Naive thymus-derived CD4-positive, alpha-beta T cell (primary cell): ENCODE measurements at regions of chr19 and their contacts with region 1.

Region 1: DNA sequence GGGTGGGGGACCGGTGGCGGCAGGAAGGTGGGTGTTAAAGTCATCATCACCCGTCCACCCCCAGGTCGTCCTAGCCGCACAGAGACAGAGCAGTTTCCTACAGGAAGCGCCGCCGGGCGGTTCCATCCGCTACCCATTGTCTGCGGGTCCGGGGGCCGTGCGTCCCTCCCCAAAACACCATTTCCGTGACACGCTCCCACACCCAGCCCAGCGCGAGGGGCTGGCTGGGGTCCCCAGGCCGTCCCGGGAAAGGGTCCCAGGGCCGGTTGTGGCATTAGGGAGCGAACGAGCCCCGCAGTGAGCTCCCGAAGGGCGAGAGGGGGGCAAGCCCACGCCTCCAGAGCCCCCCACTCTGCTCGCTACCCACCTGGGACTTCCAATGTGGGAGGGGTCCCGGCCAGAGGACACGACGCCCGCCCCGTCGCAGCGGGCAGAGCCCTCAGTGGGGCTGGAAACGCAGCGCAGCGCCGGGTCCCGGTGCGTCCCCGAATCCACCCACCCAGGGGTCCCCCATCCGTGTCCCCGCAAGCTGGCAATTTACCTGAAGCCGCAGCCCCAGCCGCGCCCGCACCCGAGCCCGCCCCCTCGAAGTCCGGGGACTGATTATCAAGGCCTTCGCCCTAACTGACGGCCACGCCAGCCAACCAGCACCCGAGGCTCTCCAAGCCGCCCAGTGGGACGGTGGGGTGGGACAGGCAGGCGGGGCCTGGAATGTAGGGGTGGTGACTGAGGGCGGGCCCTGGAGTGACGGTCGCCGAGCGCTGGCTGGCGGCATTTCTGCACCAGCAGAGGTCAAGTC is at the start of gene KANK3:
- DNase-seq: peak; percentile 74 to 90 (median 86)
- ATAC-seq: peak; percentile 100
- H3K4me3 ChIP-seq: peak within 1 kb of the TSS; percentile 64
- H3K4me3 Mint-ChIP-seq: peak within 1 kb of the TSS; percentile 64 to 88 (median 82)
- H3K27ac ChIP-seq: peak within 1 kb of the TSS; percentile 56
- H3K27ac Mint-ChIP-seq: peak within 1 kb of the TSS in 5 of 9 donors; percentile 8 to 84 (median 67)
- H3K4me1 ChIP-seq: no peaks in the 10 kb centered on the region
- H3K4me1 Mint-ChIP-seq: peaks cover 0 to 13% (median 6%) of the 10 kb centered on the region in 7 donors
- H3K27me3 ChIP-seq: no peaks in the 10 kb centered on the region
- H3K27me3 Mint-ChIP-seq: peaks cover 5 to 46% (median 5%) of the 10 kb centered on the region in 5 donors
- total RNA-seq, gene KANK3: 1.3 to 4.4 (median 1.8) TPM

Region 2: GRCh38 chr19:8005534-8006256 is 337.2 kb before region 1 on chr19 and contains the start of gene ELAVL1:
- CTCF ChIA-PET with region 1: no interaction called
- POLR2A ChIA-PET with region 1: no interaction called
- intact Hi-C with region 1: no loop called
- DNase-seq: peak; percentile 80 to 96 (median 88)
- ATAC-seq: peak; percentile 96
- H3K4me3 ChIP-seq: peak within 1 kb of the TSS; percentile 86
- H3K4me3 Mint-ChIP-seq: peak within 1 kb of the TSS; percentile 88 to 97 (median 92)
- H3K27ac ChIP-seq: peak within 1 kb of the TSS; percentile 93
- H3K27ac Mint-ChIP-seq: peak within 1 kb of the TSS; percentile 78 to 94 (median 90)
- H3K4me1 ChIP-seq: peaks cover 20 to 25% of the 10 kb centered on the region in 2 donors
- H3K4me1 Mint-ChIP-seq: peaks cover 30 to 43% (median 37%) of the 10 kb centered on the region in 7 donors
- H3K27me3 ChIP-seq: no peaks in the 10 kb centered on the region
- H3K27me3 Mint-ChIP-seq: no peaks in the 10 kb centered on the region
- total RNA-seq, gene ELAVL1: 32.4 to 117 (median 49.6) TPM

Region 3: GRCh38 chr19:8269724-8270123 is 73.2 kb before region 1 on chr19:
- CTCF ChIA-PET with region 1: interaction called, 4 read pairs
- POLR2A ChIA-PET with region 1: no interaction called
- intact Hi-C with region 1: loop called in 1 of 2 experiments (anchors 5 kb)
- DNase-seq: no peak
- ATAC-seq: no peak
- H3K4me3 ChIP-seq: peak overlapping the region; percentile 98
- H3K4me3 Mint-ChIP-seq: peak overlapping the region; percentile 85 to 97 (median 93)
- H3K27ac ChIP-seq: peak overlapping the region; percentile 88
- H3K27ac Mint-ChIP-seq: peak overlapping the region; percentile 66 to 95 (median 93)
- H3K4me1 ChIP-seq: peaks cover 0 to 6% of the 10 kb centered on the region in 2 donors
- H3K4me1 Mint-ChIP-seq: peaks cover 7 to 25% (median 13%) of the 10 kb centered on the region in 7 donors
- H3K27me3 ChIP-seq: no peaks in the 10 kb centered on the region
- H3K27me3 Mint-ChIP-seq: no peaks in the 10 kb centered on the region

Region 4: GRCh38 chr19:8321060-8321985 is 21.6 kb before region 1 on chr19 and contains the starts of genes NDUFA7 and RPS28:
- CTCF ChIA-PET with region 1: no interaction called
- POLR2A ChIA-PET with region 1: interaction called, 15 read pairs
- intact Hi-C with region 1: loop called in 1 of 2 experiments (anchors 1 kb)
- DNase-seq: peak; percentile 94 to 97 (median 96)
- ATAC-seq: peak; percentile 98
- H3K4me3 ChIP-seq: peak within 1 kb of the TSS; percentile 98
- H3K4me3 Mint-ChIP-seq: peak within 1 kb of the TSS; percentile 90 to 99 (median 98)
- H3K27ac ChIP-seq: peak within 1 kb of the TSS; percentile 96
- H3K27ac Mint-ChIP-seq: peak within 1 kb of the TSS; percentile 94 to 99 (median 98)
- H3K4me1 ChIP-seq: peaks cover 25% of the 10 kb centered on the region in 2 donors
- H3K4me1 Mint-ChIP-seq: peaks cover 16 to 44% (median 29%) of the 10 kb centered on the region in 7 donors
- H3K27me3 ChIP-seq: no peaks in the 10 kb centered on the region
- H3K27me3 Mint-ChIP-seq: no peaks in the 10 kb centered on the region
- total RNA-seq, gene NDUFA7: 16.8 to 50.3 (median 30.0) TPM
- total RNA-seq, gene RPS28: 2,319 to 4,111 (median 3,327) TPM

Region 5: GRCh38 chr19:8412783-8413628 is 70.1 kb after region 1 on chr19 and contains the start of gene MARCHF2:
- CTCF ChIA-PET with region 1: no interaction called
- POLR2A ChIA-PET with region 1: no interaction called
- intact Hi-C with region 1: loop called in 1 of 2 experiments (anchors 5 kb)
- DNase-seq: peak; percentile 91 to 96 (median 93)
- ATAC-seq: peak; percentile 100
- H3K4me3 ChIP-seq: peak within 1 kb of the TSS; percentile 72
- H3K4me3 Mint-ChIP-seq: peak within 1 kb of the TSS; percentile 58 to 85 (median 71)
- H3K27ac ChIP-seq: peak within 1 kb of the TSS; percentile 76
- H3K27ac Mint-ChIP-seq: peak within 1 kb of the TSS in 6 of 9 donors; percentile 11 to 84 (median 34)
- H3K4me1 ChIP-seq: peaks cover 0 to 6% of the 10 kb centered on the region in 2 donors
- H3K4me1 Mint-ChIP-seq: peaks cover 0 to 15% (median 13%) of the 10 kb centered on the region in 7 donors
- H3K27me3 ChIP-seq: no peaks in the 10 kb centered on the region
- H3K27me3 Mint-ChIP-seq: no peaks in the 10 kb centered on the region
- total RNA-seq, gene MARCHF2: 18.0 to 42.1 (median 23.4) TPM

Region 6: GRCh38 chr19:8592231-8593009 is 249.5 kb after region 1 on chr19:
- CTCF ChIA-PET with region 1: no interaction called
- POLR2A ChIA-PET with region 1: no interaction called
- intact Hi-C with region 1: loop called in 1 of 2 experiments (anchors 5 kb)
- DNase-seq: peak; percentile 80 to 98 (median 96)
- ATAC-seq: peak; percentile 93
- H3K4me3 ChIP-seq: peak overlapping the region; percentile 81
- H3K4me3 Mint-ChIP-seq: peak overlapping the region; percentile 81 to 95 (median 88)
- H3K27ac ChIP-seq: peak overlapping the region; percentile 63
- H3K27ac Mint-ChIP-seq: peak overlapping the region; percentile 17 to 89 (median 76)
- H3K4me1 ChIP-seq: peaks cover 5 to 15% of the 10 kb centered on the region in 2 donors
- H3K4me1 Mint-ChIP-seq: peaks cover 6 to 37% (median 29%) of the 10 kb centered on the region in 7 donors
- H3K27me3 ChIP-seq: no peaks in the 10 kb centered on the region
- H3K27me3 Mint-ChIP-seq: peaks cover 0 to 29% (median 0%) of the 10 kb centered on the region in 5 donors

Region 7: DNA sequence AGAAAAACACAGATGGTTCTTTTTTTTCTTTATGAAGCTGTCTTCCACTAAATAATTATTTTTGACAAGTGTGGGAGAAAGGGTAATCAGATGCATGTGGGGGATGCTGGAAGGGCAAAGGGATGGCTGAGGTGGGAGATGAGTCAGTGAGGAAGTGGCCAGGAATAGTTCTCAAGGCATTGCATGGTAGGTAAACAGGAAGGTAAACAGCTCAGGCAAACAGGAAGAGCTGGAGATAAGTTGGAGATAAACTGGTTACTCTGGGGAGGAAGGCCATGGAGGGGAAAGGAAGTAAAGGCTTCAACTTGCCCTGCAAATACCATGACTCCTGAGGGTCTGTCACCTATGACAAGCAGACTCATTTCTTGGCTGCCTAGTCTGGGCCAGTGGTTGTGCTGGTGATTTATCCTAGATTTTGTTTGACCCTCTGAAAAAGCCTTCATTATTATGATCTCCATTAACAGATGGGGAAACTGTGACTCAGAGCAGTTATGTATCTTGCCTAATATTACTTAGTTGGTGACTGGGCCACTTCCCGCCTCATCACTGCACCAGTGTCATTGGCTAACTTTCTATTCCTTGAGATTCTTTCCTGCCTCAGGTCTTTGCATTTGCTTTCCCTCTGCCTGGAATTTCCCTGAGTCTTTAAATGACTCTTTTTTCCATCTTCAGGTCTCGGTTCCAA is 338.6 kb after region 1 on chr19:
- CTCF ChIA-PET with region 1: no interaction called
- POLR2A ChIA-PET with region 1: no interaction called
- intact Hi-C with region 1: no loop called
- DNase-seq: no peak
- ATAC-seq: peak; percentile 61
- H3K4me3 ChIP-seq: no peak overlapping the region
- H3K4me3 Mint-ChIP-seq: peak overlapping the region in 1 of 10 donors; percentile 29
- H3K27ac ChIP-seq: no peak overlapping the region
- H3K27ac Mint-ChIP-seq: peak overlapping the region in 2 of 9 donors; percentile 20 to 33
- H3K4me1 ChIP-seq: no peaks in the 10 kb centered on the region
- H3K4me1 Mint-ChIP-seq: peaks cover 0 to 29% (median 3%) of the 10 kb centered on the region in 7 donors
- H3K27me3 ChIP-seq: no peaks in the 10 kb centered on the region
- H3K27me3 Mint-ChIP-seq: peaks cover 0 to 1% (median 0%) of the 10 kb centered on the region in 5 donors